Lower lobe of right lung (tissue), 2 donors: ENCODE measurements at regions of chr14 and their contacts with region 1.

Region 1: DNA sequence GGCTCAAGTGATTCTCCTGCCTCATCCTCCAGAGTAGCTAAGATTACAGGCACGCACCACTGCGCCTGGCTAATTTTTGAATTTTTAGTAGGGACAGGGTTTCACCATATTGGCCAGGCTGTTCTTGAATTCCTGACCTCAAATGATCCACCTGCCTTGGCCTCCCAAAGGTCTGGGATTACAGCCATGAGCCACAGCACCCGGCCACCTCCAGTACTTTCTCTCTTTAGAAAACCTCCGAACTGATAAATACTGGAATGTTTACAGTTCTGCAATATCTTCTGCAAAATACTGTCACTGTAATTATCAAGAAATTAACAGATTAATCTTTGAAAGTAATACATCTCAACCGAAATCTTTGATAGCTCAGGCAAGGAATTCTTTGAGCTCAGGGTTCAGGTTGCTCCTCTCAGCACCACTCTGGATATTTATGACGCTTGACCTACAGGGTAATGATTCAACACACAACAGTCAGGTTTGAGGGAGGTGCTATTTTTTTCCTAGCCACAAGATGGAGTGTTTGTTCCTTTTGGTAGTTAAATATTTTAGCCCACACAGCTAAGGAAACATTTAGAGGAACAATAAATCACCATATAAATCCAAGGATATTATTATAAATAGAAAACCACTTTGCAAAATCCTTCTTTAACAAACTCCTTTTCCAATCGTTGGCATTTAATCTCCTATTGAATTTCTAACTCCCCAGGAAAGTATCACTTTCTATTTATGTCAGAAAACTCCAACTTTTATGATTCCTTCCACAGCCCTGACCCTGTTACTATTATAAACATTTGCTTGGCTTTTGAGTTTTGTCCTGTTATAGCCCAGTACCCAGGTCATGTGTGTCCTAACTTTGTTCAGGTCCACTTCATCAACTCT is 48.6 kb upstream of the GTF2A1 start:
- DNase-seq: no peak
- ATAC-seq: peak; percentile 86
- H3K4me3 ChIP-seq: no peak overlapping the region
- H3K27ac ChIP-seq: no peak overlapping the region
- H3K4me1 ChIP-seq: peaks cover 6% of the 10 kb centered on the region
- H3K27me3 ChIP-seq: no peaks in the 10 kb centered on the region
- CTCF ChIP-seq: peak; percentile 79

Region 2: DNA sequence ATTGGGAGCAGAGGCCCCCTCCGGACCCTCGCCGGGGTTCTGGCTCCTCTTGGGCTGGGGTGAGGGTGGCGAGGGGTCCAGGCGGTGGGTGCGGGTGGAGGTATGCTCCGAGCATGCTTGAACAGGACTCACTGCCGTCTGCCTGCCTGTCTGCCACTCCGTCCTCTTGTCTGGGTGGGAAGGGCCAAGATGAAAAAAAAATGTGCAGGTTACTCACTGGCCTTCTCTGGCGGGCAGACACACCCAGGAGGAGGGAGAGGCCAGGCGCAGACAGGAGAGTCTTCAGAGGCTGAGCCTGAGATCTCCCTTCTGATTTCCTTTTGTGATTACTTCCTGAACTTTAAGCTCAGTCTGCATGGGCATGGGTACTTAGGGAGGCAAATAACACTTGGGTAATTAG is 54.7 kb after region 1 on chr14:
- intact Hi-C with region 1: no loop called
- DNase-seq: peak; percentile 47
- ATAC-seq: peak; percentile 86 to 96
- H3K4me3 ChIP-seq: peak overlapping the region; percentile 35
- H3K27ac ChIP-seq: no peak overlapping the region
- H3K4me1 ChIP-seq: no peaks in the 10 kb centered on the region
- H3K27me3 ChIP-seq: no peaks in the 10 kb centered on the region
- CTCF ChIP-seq: no peak

Region 3: GRCh38 chr14:81453166-81453766 is 183.9 kb after region 1 on chr14:
- intact Hi-C with region 1: loop called (anchors 10 kb)
- DNase-seq: no peak
- ATAC-seq: peak; percentile 68 to 75
- H3K4me3 ChIP-seq: no peak overlapping the region
- H3K27ac ChIP-seq: no peak overlapping the region
- H3K4me1 ChIP-seq: peaks cover 17% of the 10 kb centered on the region
- H3K27me3 ChIP-seq: peaks cover 10% of the 10 kb centered on the region
- CTCF ChIP-seq: peak; percentile 84